Sciatic nerve (tissue), 2 donors: ENCODE measurements at regions of chr1 and their contacts with region 1.

Region 1: GRCh38 chr1:221085712-221086375 is 206.6 kb downstream of the HLX start:
- DNase-seq: no peak
- ATAC-seq: no peak

Region 2: DNA sequence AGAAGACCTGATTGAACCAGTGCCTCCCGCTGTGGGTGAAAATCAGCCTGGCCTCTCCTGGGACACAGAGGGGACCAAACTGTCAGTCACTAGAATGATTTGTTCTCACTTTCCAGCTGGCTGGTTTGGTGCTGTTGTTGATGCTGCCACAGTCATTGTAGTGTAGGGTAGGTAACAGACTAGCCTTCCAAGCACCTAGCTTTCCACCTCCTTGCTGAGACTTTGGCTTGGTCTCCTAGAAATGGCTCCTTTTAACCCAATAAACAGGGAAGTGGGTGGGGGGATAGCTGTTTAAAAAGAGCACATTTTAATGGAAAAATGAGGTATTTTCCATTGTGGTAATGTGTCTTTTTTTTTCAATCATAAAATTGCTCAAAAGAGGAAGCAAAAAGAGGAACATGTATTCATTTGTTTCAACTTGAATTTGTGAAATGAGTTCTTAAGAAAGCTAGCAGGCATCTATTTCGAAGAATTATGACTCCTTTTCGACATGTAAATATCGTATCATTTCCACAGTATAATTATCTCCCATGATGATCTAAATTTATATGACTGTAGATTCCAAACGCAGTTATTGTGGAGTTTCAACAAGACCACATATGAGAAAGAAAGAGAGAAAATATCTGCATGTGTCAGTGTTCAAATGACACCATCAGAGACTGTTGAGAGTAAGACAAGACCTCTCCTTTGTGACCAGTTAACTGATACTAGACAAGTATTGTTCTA is 16.5 kb before region 1 on chr1:
- intact Hi-C with region 1: no loop called
- DNase-seq: no peak
- ATAC-seq: no peak

Region 3: GRCh38 chr1:221137666-221138065 is 51.8 kb after region 1 on chr1:
- intact Hi-C with region 1: loop called (anchors 2 kb)
- DNase-seq: no peak
- ATAC-seq: no peak